ENCODE measurements at regions of chr19 and their contacts with region 1.

Region 1: DNA sequence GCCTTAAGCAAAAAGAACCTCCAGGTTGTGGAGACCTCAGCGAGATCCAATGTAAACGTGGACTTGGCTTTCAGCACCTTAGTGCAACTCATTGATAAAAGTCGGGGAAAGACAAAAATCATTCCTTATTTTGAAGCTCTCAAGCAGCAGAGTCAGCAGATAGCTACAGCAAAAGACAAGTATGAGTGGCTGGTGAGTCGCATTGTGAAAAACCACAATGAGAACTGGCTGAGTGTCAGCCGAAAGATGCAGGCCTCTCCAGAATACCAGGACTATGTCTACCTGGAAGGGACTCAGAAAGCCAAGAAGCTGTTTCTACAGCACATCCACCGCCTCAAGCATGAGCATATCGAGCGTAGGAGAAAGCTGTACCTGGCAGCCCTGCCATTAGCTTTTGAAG is 58.5 kb downstream of the ARHGAP35 start:
- DNase-seq: no peak
- ATAC-seq: no peak
- H3K4me3 ChIP-seq: no peak overlapping the region
- H3K4me3 Mint-ChIP-seq: no peak overlapping the region
- H3K27ac ChIP-seq: no peak overlapping the region
- H3K27ac Mint-ChIP-seq: no peak overlapping the region
- H3K4me1 ChIP-seq: peaks cover 13% of the 10 kb centered on the region
- H3K4me1 Mint-ChIP-seq: peaks cover 36% of the 10 kb centered on the region
- H3K27me3 ChIP-seq: no peaks in the 10 kb centered on the region
- H3K27me3 Mint-ChIP-seq: no peaks in the 10 kb centered on the region
- CTCF ChIP-seq: no peak

Region 2: DNA sequence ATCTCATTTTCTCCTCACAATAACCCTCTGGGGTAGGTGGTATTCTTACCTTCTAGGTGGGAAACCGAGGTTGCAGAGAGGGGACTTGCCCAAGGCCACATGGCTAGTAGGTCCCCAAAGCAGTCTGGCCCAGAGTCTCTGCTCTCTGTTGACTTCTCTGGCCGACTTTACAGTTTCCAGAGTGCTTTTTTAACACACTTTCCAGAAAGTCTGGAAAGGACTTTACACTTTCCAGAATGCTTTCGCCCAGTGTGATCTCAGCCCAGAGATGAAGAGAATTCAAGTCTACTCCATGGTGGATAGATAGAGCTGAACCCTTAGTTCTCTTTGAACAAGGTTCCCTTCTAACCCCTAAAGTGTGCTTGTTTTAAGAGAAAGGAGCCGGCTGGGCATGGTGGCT is 46.4 kb before region 1 on chr19:
- CTCF ChIA-PET with region 1: no interaction called
- POLR2A ChIA-PET with region 1: no interaction called
- intact Hi-C with region 1: loop called (anchors 5 to 10 kb)
- DNase-seq: no peak
- ATAC-seq: no peak
- H3K4me3 ChIP-seq: no peak overlapping the region
- H3K4me3 Mint-ChIP-seq: no peak overlapping the region
- H3K27ac ChIP-seq: no peak overlapping the region
- H3K27ac Mint-ChIP-seq: no peak overlapping the region
- H3K4me1 ChIP-seq: peaks cover 5% of the 10 kb centered on the region
- H3K4me1 Mint-ChIP-seq: peaks cover 20% of the 10 kb centered on the region
- H3K27me3 ChIP-seq: no peaks in the 10 kb centered on the region
- H3K27me3 Mint-ChIP-seq: no peaks in the 10 kb centered on the region
- CTCF ChIP-seq: no peak

Region 3: GRCh38 chr19:46932346-46932745 is 13.0 kb after region 1 on chr19:
- CTCF ChIA-PET with region 1: no interaction called
- POLR2A ChIA-PET with region 1: no interaction called
- intact Hi-C with region 1: no loop called
- DNase-seq: no peak
- ATAC-seq: no peak
- H3K4me3 ChIP-seq: no peak overlapping the region
- H3K4me3 Mint-ChIP-seq: no peak overlapping the region
- H3K27ac ChIP-seq: no peak overlapping the region
- H3K27ac Mint-ChIP-seq: peak overlapping the region; percentile 82
- H3K4me1 ChIP-seq: peaks cover 65% of the 10 kb centered on the region
- H3K4me1 Mint-ChIP-seq: peaks cover 70% of the 10 kb centered on the region
- H3K27me3 ChIP-seq: no peaks in the 10 kb centered on the region
- H3K27me3 Mint-ChIP-seq: no peaks in the 10 kb centered on the region
- CTCF ChIP-seq: no peak